CD8-positive, alpha-beta T cell (primary cell): ENCODE measurements at regions of chr12 and their contacts with region 1.

Region 1: DNA sequence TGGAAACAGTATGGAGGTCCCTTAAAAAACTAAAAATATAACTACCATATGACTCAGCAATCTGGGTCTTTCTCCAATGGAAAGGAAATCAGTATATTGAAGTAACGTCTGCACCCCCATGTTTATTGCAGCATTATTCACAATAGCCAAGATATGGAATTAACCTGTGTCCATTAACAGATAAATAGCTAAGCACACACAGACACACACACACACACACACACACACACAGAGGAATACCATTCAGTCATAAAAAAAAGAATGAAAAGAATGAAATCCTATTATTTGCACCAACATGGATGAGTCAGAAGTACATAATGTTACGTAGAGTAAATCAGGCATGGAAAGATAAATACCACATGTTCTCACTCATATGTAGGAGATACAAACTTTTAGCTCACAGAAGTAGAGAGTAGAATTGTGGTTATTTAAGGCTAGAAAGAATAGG is 4.7 kb downstream of the KLRK1 start:
- DNase-seq: peak in 1 of 9 experiments; percentile 57
- ATAC-seq: peak; percentile 57
- H3K4me3 ChIP-seq: peak overlapping the region; percentile 61 to 68
- H3K4me3 Mint-ChIP-seq: peak overlapping the region; percentile 87
- H3K27ac ChIP-seq: peak overlapping the region; percentile 50 to 97
- H3K27ac Mint-ChIP-seq: peak overlapping the region; percentile 92
- H3K4me1 ChIP-seq: peaks cover 25% of the 10 kb centered on the region
- H3K4me1 Mint-ChIP-seq: peaks cover 58% of the 10 kb centered on the region
- H3K27me3 ChIP-seq: no peaks in the 10 kb centered on the region
- H3K27me3 Mint-ChIP-seq: no peaks in the 10 kb centered on the region
- CTCF ChIP-seq: no peak

Region 2: DNA sequence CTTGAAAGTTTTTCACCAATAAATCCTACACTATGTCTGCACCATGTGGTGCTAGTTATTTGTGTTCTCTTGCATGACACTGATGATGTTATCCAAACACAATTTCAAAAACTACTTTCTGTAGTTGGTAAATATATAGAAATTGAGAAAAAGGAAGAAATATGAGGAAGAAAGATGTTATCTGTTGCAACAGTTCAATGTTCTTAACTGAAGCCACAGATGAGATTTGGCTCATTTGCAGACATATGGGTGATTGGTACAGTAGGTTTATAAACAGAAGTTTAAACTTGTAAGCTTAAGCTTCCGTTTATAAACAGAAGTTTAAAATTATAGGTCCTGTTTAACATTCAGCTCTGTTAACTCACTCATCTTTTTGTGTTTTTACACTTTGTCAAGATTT is 414.0 kb before region 1 on chr12 and contains the start of gene CLEC12A:
- CTCF ChIA-PET with region 1: no interaction called
- POLR2A ChIA-PET with region 1: no interaction called
- intact Hi-C with region 1: no loop called
- DNase-seq: no peak
- ATAC-seq: no peak
- H3K4me3 ChIP-seq: no peak within 1 kb of the TSS
- H3K4me3 Mint-ChIP-seq: no peak within 1 kb of the TSS
- H3K27ac ChIP-seq: no peak within 1 kb of the TSS
- H3K27ac Mint-ChIP-seq: no peak within 1 kb of the TSS
- H3K4me1 ChIP-seq: no peaks in the 10 kb centered on the region
- H3K4me1 Mint-ChIP-seq: no peaks in the 10 kb centered on the region
- H3K27me3 ChIP-seq: no peaks in the 10 kb centered on the region
- H3K27me3 Mint-ChIP-seq: peaks cover 11% of the 10 kb centered on the region
- CTCF ChIP-seq: no peak
- total RNA-seq, gene CLEC12A: not detected

Region 3: DNA sequence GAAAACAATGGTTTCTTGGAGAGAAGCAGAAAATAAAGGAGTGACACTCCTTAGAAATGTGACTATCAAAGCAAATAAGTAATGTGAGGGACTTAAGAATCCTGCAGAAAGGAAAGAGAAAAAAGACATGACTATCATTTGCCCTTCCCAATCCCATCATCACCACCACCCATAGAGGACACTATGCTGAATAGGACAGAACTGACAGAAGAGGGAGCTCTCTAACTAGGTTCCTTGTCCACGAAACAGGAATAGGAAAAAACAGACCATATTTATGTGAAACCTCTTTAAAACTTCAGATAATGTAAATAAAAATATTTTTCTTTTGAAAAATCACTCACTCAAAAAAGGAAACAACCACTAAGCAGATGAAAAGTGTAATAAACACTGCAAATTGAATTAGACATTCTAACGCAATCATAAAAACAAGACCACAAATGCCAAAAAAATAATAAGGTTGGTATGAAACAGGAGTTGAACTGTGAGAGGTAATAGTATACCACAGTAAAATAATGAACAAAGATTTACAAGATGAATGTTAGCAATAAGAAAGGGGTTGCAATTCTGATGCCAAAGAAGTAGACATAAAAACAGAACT is 53.4 kb before region 1 on chr12:
- CTCF ChIA-PET with region 1: no interaction called
- POLR2A ChIA-PET with region 1: no interaction called
- intact Hi-C with region 1: loop called in 1 of 2 experiments (anchors 5 kb)
- DNase-seq: peak in 3 of 9 experiments; percentile 8 to 77 (median 63)
- ATAC-seq: no peak
- H3K4me3 ChIP-seq: no peak overlapping the region
- H3K4me3 Mint-ChIP-seq: peak overlapping the region; percentile 26
- H3K27ac ChIP-seq: no peak overlapping the region
- H3K27ac Mint-ChIP-seq: no peak overlapping the region
- H3K4me1 ChIP-seq: peaks cover 6% of the 10 kb centered on the region
- H3K4me1 Mint-ChIP-seq: peaks cover 10% of the 10 kb centered on the region
- H3K27me3 ChIP-seq: no peaks in the 10 kb centered on the region
- H3K27me3 Mint-ChIP-seq: no peaks in the 10 kb centered on the region
- CTCF ChIP-seq: peak; percentile 51

Region 4: GRCh38 chr12:10372534-10372931 is 12.7 kb before region 1 on chr12:
- CTCF ChIA-PET with region 1: interaction called, 4 read pairs
- POLR2A ChIA-PET with region 1: interaction called, 29 read pairs
- intact Hi-C with region 1: loop called (anchors 1 to 2 kb)
- DNase-seq: peak in 2 of 9 experiments; percentile 37 to 60
- ATAC-seq: peak; percentile 30
- H3K4me3 ChIP-seq: peak overlapping the region; percentile 12 to 17
- H3K4me3 Mint-ChIP-seq: peak overlapping the region; percentile 43
- H3K27ac ChIP-seq: peak overlapping the region in 1 of 2 experiments; percentile 65
- H3K27ac Mint-ChIP-seq: peak overlapping the region; percentile 83
- H3K4me1 ChIP-seq: peaks cover 92% of the 10 kb centered on the region
- H3K4me1 Mint-ChIP-seq: peaks cover 82% of the 10 kb centered on the region
- H3K27me3 ChIP-seq: no peaks in the 10 kb centered on the region
- H3K27me3 Mint-ChIP-seq: no peaks in the 10 kb centered on the region
- CTCF ChIP-seq: no peak

Region 5: GRCh38 chr12:10554228-10554755 is 169.1 kb after region 1 on chr12:
- CTCF ChIA-PET with region 1: interaction called, 6 read pairs
- POLR2A ChIA-PET with region 1: interaction called, 66 read pairs
- intact Hi-C with region 1: loop called in 1 of 2 experiments (anchors 5 kb)
- DNase-seq: peak in 8 of 9 experiments; percentile 29 to 85 (median 70)
- ATAC-seq: peak; percentile 64
- H3K4me3 ChIP-seq: peak overlapping the region; percentile 61 to 64
- H3K4me3 Mint-ChIP-seq: peak overlapping the region; percentile 90
- H3K27ac ChIP-seq: peak overlapping the region; percentile 80 to 95
- H3K27ac Mint-ChIP-seq: peak overlapping the region; percentile 100
- H3K4me1 ChIP-seq: peaks cover 32% of the 10 kb centered on the region
- H3K4me1 Mint-ChIP-seq: peaks cover 61% of the 10 kb centered on the region
- H3K27me3 ChIP-seq: no peaks in the 10 kb centered on the region
- H3K27me3 Mint-ChIP-seq: no peaks in the 10 kb centered on the region
- CTCF ChIP-seq: no peak

Region 6: GRCh38 chr12:10562306-10562933 is 177.2 kb after region 1 on chr12:
- CTCF ChIA-PET with region 1: interaction called, 12 read pairs
- POLR2A ChIA-PET with region 1: interaction called, 18 read pairs
- intact Hi-C with region 1: loop called in 1 of 2 experiments (anchors 5 kb)
- DNase-seq: peak in 4 of 9 experiments; percentile 29 to 79 (median 62)
- ATAC-seq: no peak
- H3K4me3 ChIP-seq: no peak overlapping the region
- H3K4me3 Mint-ChIP-seq: peak overlapping the region; percentile 11
- H3K27ac ChIP-seq: no peak overlapping the region
- H3K27ac Mint-ChIP-seq: peak overlapping the region; percentile 80
- H3K4me1 ChIP-seq: peaks cover 70% of the 10 kb centered on the region
- H3K4me1 Mint-ChIP-seq: peaks cover 83% of the 10 kb centered on the region
- H3K27me3 ChIP-seq: no peaks in the 10 kb centered on the region
- H3K27me3 Mint-ChIP-seq: no peaks in the 10 kb centered on the region
- CTCF ChIP-seq: peak; percentile 98

Region 7: GRCh38 chr12:10721651-10722501 is 336.7 kb after region 1 on chr12:
- CTCF ChIA-PET with region 1: no interaction called
- POLR2A ChIA-PET with region 1: no interaction called
- intact Hi-C with region 1: loop called in 1 of 2 experiments (anchors 5 kb)
- DNase-seq: peak; percentile 26 to 96 (median 63)
- ATAC-seq: peak; percentile 75
- H3K4me3 ChIP-seq: peak overlapping the region; percentile 69 to 72
- H3K4me3 Mint-ChIP-seq: peak overlapping the region; percentile 91
- H3K27ac ChIP-seq: peak overlapping the region; percentile 86 to 94
- H3K27ac Mint-ChIP-seq: peak overlapping the region; percentile 93
- H3K4me1 ChIP-seq: peaks cover 25% of the 10 kb centered on the region
- H3K4me1 Mint-ChIP-seq: peaks cover 50% of the 10 kb centered on the region
- H3K27me3 ChIP-seq: peaks cover 0 to 6% of the 10 kb centered on the region in 2 experiments
- H3K27me3 Mint-ChIP-seq: peaks cover 15% of the 10 kb centered on the region
- CTCF ChIP-seq: no peak